Endothelial cell of umbilical vein (primary cell): ENCODE measurements at regions of chr16 and their contacts with region 1.

Region 1: DNA sequence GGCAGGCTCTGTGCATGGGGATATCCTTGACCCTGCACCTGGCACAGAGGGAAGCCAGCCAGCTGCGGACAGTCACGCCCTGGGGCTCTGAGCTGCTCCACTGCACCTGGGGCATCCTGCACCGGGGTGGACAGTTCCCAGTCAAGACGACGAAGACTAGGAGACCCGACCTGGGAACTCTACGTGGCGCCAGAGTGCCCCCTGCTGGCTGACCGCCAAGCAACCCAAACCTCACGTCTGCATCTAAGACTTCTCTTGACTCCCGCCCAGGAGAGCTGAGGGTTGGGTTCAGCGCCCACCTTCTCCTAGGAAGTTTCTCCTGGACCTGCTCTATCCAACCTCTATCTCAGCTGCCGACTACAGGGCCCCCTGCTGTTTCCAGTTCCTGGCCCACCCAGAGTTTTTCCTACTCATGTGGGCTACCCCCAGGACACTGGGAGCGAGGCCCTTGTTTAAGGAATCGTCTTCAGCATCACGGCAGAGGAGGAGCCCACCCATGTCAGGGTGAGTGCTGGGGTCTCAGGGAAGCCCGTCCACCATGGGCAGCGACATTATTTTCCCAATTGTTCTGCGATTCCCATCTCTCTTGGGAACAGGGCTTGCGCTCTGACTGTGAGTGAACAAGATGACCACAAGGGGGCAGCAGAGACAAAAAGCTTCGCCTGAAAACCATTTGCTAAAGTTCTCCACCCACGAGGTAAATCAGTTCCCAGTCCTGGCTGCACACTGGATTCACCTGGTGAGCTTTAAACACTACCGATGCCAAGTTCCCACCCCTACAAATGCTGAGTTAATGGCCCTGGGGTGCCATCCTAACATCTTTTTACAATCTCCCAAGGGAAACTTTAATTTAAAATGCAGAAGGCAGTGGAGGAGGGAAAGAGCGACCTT is 29.3 kb downstream of the TLE7 start:
- DNase-seq: peak; percentile 59
- H3K4me3 ChIP-seq: no peak overlapping the region
- H3K27ac ChIP-seq: no peak overlapping the region
- H3K4me1 ChIP-seq: no peaks in the 10 kb centered on the region
- H3K27me3 ChIP-seq: no peaks in the 10 kb centered on the region
- CTCF ChIP-seq: peak; percentile 74 to 81
- POLR2A ChIP-seq: no peak

Region 2: DNA sequence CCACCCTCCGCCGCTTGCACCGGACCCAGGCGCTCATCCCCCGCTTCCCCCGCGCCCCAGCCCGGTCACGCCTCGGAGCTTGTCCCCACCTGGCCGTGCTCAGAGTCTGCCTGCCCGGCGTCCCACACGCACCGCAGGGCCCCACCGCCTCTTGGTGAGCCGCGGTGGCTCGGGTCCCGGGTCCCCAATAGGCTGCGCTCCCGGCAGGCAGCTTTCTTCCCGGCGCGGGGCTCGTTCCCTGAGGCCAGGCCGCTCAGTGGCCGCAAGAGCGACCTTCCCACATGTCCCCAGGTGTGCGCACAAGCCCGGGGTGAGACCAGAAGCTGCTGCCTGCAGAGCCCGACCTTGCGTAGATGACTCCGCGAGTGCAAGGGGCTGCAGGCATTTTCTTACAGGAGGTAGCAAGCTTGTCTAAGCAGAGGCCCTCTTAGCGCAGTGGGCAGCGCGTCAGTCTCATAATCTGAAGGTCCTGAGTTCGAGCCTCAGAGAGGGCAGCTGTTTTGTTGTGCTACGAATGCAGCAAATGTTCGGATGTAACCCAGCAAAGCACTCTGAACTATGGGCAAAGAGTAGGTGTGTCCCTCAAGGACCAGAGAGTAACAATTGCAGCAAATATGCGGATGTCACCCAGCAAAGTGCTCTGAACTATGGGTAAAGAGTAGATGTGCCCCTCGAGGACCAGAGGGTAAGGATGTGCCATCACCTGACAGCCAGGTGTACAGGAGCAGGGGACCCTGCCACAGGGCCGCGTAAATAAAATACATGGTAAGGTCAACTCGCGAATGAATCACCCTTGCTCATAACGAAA is 13.8 kb after region 1 on chr16:
- CTCF ChIA-PET with region 1: interaction called, 37 read pairs
- POLR2A ChIA-PET with region 1: no interaction called
- dilution Hi-C with region 1: no loop called
- intact Hi-C with region 1: no loop called
- DNase-seq: peak; percentile 61
- H3K4me3 ChIP-seq: peak overlapping the region; percentile 10 to 15 (median 13)
- H3K27ac ChIP-seq: no peak overlapping the region
- H3K4me1 ChIP-seq: no peaks in the 10 kb centered on the region
- H3K27me3 ChIP-seq: peaks cover 3 to 7% of the 10 kb centered on the region in 2 experiments
- CTCF ChIP-seq: no peak
- POLR2A ChIP-seq: no peak

Region 3: GRCh38 chr16:71493213-71493612 is 80.7 kb after region 1 on chr16:
- CTCF ChIA-PET with region 1: interaction called, 229 read pairs
- POLR2A ChIA-PET with region 1: no interaction called
- dilution Hi-C with region 1: no loop called
- intact Hi-C with region 1: no loop called
- DNase-seq: no peak
- H3K4me3 ChIP-seq: no peak overlapping the region
- H3K27ac ChIP-seq: no peak overlapping the region
- H3K4me1 ChIP-seq: no peaks in the 10 kb centered on the region
- H3K27me3 ChIP-seq: peaks cover 0 to 5% of the 10 kb centered on the region in 2 experiments
- CTCF ChIP-seq: no peak
- POLR2A ChIP-seq: no peak

Region 4: GRCh38 chr16:71537643-71538042 is 125.1 kb after region 1 on chr16:
- CTCF ChIA-PET with region 1: interaction called, 22 read pairs
- POLR2A ChIA-PET with region 1: no interaction called
- dilution Hi-C with region 1: no loop called
- intact Hi-C with region 1: loop called (anchors 1 kb)
- DNase-seq: peak; percentile 33
- H3K4me3 ChIP-seq: no peak overlapping the region
- H3K27ac ChIP-seq: no peak overlapping the region
- H3K4me1 ChIP-seq: no peaks in the 10 kb centered on the region
- H3K27me3 ChIP-seq: peaks cover 0 to 2% of the 10 kb centered on the region in 2 experiments
- CTCF ChIP-seq: peak; percentile 34 to 60
- POLR2A ChIP-seq: no peak